Activated CD8-positive, alpha-beta T cell treated with anti-CD3 and anti-CD28 coated beads for 36 hours (primary cell): ENCODE measurements at regions of chr6 and their contacts with region 1.

Region 1: GRCh38 chr6:37202788-37203491 is 33.0 kb downstream of the PIM1 start:
- DNase-seq: no peak
- ATAC-seq: peak; percentile 47
- H3K4me3 Mint-ChIP-seq: no peak overlapping the region
- H3K27ac Mint-ChIP-seq: peak overlapping the region; percentile 73
- H3K4me1 Mint-ChIP-seq: peaks cover 59% of the 10 kb centered on the region
- H3K27me3 Mint-ChIP-seq: no peaks in the 10 kb centered on the region
- CTCF ChIP-seq: no peak

Region 2: GRCh38 chr6:37177077-37177934 is 25.6 kb before region 1 on chr6:
- CTCF ChIA-PET with region 1: interaction called, 278 read pairs
- POLR2A ChIA-PET with region 1: interaction called, 222 read pairs
- intact Hi-C with region 1: loop called (anchors 2 kb)
- DNase-seq: no peak
- ATAC-seq: no peak
- H3K4me3 Mint-ChIP-seq: peak overlapping the region; percentile 8
- H3K27ac Mint-ChIP-seq: peak overlapping the region; percentile 91
- H3K4me1 Mint-ChIP-seq: peaks cover 67% of the 10 kb centered on the region
- H3K27me3 Mint-ChIP-seq: no peaks in the 10 kb centered on the region
- CTCF ChIP-seq: no peak

Region 3: DNA sequence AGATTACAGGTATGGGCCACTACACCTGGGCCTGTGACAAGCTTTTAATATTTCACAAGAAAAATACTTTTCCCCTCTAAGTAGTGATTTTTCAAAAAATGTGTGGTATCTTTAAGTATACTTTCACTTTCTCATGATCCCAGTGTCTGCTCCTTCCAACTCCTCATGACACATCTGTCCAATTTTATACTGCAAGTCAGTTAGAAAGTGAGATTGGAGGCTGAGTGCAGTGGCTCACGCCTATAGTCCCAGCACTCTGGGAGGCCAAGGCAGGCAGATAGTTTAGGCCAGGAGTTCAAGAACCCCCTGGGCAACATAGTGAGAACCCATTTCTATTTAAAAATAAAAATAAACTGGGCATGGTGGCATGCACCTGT is 12.8 kb before region 1 on chr6:
- CTCF ChIA-PET with region 1: interaction called, 57 read pairs
- POLR2A ChIA-PET with region 1: interaction called, 11 read pairs
- intact Hi-C with region 1: no loop called
- DNase-seq: peak; percentile 52
- ATAC-seq: peak; percentile 63
- H3K4me3 Mint-ChIP-seq: no peak overlapping the region
- H3K27ac Mint-ChIP-seq: peak overlapping the region; percentile 77
- H3K4me1 Mint-ChIP-seq: peaks cover 72% of the 10 kb centered on the region
- H3K27me3 Mint-ChIP-seq: no peaks in the 10 kb centered on the region
- CTCF ChIP-seq: no peak

Region 4: DNA sequence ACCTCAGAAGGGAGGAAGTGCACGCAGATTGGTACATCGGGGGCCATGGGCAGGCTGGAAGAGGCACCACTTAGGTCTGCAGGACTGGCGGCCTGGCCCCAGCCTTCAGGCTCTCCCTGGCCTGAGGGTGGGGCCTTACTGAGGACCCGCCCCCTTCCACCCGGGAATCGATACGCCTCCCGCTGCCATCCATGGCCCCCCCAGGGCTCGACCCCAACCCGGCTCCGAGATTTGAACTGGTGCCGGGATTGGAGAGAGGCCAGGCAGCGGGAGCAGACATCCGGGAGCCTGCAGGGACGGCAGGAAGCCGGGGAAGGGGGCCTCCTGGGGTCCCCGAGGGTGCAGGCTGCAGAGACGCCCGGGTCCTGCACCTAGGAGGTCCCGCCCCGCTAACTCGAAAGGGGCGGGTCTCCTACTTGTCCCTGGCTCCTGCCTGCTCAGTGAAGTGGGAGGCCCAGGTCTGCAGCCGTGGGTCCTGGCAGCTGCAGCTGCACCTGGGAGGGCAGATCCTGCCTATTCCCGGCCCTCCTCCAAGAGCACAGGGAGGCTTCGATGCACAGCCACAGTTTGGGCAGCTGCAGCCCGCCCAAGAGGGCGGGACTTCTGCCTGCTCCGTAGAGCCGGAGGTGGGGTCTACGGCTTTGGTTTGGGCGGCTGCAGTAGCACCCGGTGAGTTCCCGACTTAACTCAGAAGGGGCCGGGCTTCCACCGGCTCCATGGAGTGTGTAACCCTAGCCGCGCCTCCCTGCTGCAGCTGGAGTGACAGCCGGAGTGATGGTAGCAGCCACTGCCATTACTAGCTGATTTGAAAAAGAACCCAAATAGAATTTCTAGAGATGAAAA is 19.4 kb after region 1 on chr6:
- CTCF ChIA-PET with region 1: no interaction called
- POLR2A ChIA-PET with region 1: no interaction called
- intact Hi-C with region 1: no loop called
- DNase-seq: peak; percentile 88
- ATAC-seq: peak; percentile 98
- H3K4me3 Mint-ChIP-seq: peak overlapping the region; percentile 68
- H3K27ac Mint-ChIP-seq: no peak overlapping the region
- H3K4me1 Mint-ChIP-seq: peaks cover 19% of the 10 kb centered on the region
- H3K27me3 Mint-ChIP-seq: no peaks in the 10 kb centered on the region
- CTCF ChIP-seq: no peak

Region 5: GRCh38 chr6:37324131-37325033 is 121.4 kb after region 1 on chr6:
- CTCF ChIA-PET with region 1: no interaction called
- POLR2A ChIA-PET with region 1: no interaction called
- intact Hi-C with region 1: no loop called
- DNase-seq: peak; percentile 48
- ATAC-seq: peak; percentile 79
- H3K4me3 Mint-ChIP-seq: no peak overlapping the region
- H3K27ac Mint-ChIP-seq: peak overlapping the region; percentile 26
- H3K4me1 Mint-ChIP-seq: peaks cover 13% of the 10 kb centered on the region
- H3K27me3 Mint-ChIP-seq: no peaks in the 10 kb centered on the region
- CTCF ChIP-seq: no peak